ENCODE measurements at regions of chr15 and their contacts with region 1.

Region 1: GRCh38 chr15:55907797-55908196 is 85.6 kb downstream of the NEDD4 start:
- DNase-seq: peak; percentile 95
- H3K4me3 ChIP-seq: no peak overlapping the region
- H3K27ac ChIP-seq: peak overlapping the region; percentile 93
- H3K4me1 ChIP-seq: peaks cover 46% of the 10 kb centered on the region
- H3K27me3 ChIP-seq: no peaks in the 10 kb centered on the region
- CTCF ChIP-seq: no peak

Region 2: GRCh38 chr15:55846116-55846707 is 61.6 kb before region 1 on chr15:
- CTCF ChIA-PET with region 1: no interaction called
- dilution Hi-C with region 1: no loop called
- in situ Hi-C with region 1: no loop called
- intact Hi-C with region 1: no loop called
- DNase-seq: peak; percentile 65
- H3K4me3 ChIP-seq: no peak overlapping the region
- H3K27ac ChIP-seq: no peak overlapping the region
- H3K4me1 ChIP-seq: no peaks in the 10 kb centered on the region
- H3K27me3 ChIP-seq: no peaks in the 10 kb centered on the region
- CTCF ChIP-seq: peak; percentile 86 to 94

Region 3: GRCh38 chr15:55897560-55898336 is 10.0 kb before region 1 on chr15:
- CTCF ChIA-PET with region 1: interaction called, 4 read pairs
- dilution Hi-C with region 1: no loop called
- in situ Hi-C with region 1: no loop called
- intact Hi-C with region 1: loop called (anchors 1 kb)
- DNase-seq: peak; percentile 79
- H3K4me3 ChIP-seq: no peak overlapping the region
- H3K27ac ChIP-seq: peak overlapping the region; percentile 77
- H3K4me1 ChIP-seq: peaks cover 14% of the 10 kb centered on the region
- H3K27me3 ChIP-seq: no peaks in the 10 kb centered on the region
- CTCF ChIP-seq: peak; percentile 91 to 99

Region 4: DNA sequence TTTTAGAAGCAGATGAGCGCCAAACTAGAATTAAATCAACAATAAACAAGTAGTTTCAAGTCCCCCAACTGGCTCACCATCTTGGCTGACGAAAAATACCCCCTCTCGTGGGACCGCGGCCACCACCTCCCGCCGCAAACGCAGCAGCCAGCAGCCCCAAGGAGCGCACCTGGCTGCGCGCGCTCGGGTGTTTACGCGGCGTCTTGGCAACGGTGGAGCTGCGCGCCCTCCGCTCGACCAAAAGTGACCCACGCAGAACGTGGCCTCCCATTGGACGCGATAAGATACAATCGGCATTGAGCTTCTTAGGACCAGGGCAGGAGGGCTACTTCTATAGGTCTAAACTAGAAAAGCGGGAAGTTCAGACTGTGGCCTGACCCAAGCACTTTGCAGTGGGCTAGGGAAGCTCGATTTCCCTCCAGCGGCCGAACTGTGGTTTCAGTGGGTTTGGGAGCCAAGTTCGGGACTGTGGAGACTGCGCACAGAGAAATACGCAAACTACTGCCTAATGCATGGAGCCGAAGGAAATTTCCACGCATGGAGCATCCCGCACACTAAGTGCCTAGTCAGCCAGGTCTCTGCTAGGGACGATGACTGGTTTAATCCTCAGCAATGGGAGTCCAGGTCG is 557.2 kb after region 1 on chr15 and contains the start of gene MNS1:
- CTCF ChIA-PET with region 1: no interaction called
- dilution Hi-C with region 1: no loop called
- in situ Hi-C with region 1: no loop called
- intact Hi-C with region 1: loop called (anchors 5 kb)
- DNase-seq: peak; percentile 95
- H3K4me3 ChIP-seq: peak within 1 kb of the TSS; percentile 46 to 58 (median 52)
- H3K27ac ChIP-seq: peak within 1 kb of the TSS; percentile 76
- H3K4me1 ChIP-seq: peaks cover 3% of the 10 kb centered on the region
- H3K27me3 ChIP-seq: no peaks in the 10 kb centered on the region
- CTCF ChIP-seq: no peak
- total RNA-seq, gene MNS1: under 0.01 to 2.4 TPM